Dorsolateral prefrontal cortex (tissue), 120 donors: ENCODE measurements at regions of chr16 and their contacts with region 1.

Region 1: DNA sequence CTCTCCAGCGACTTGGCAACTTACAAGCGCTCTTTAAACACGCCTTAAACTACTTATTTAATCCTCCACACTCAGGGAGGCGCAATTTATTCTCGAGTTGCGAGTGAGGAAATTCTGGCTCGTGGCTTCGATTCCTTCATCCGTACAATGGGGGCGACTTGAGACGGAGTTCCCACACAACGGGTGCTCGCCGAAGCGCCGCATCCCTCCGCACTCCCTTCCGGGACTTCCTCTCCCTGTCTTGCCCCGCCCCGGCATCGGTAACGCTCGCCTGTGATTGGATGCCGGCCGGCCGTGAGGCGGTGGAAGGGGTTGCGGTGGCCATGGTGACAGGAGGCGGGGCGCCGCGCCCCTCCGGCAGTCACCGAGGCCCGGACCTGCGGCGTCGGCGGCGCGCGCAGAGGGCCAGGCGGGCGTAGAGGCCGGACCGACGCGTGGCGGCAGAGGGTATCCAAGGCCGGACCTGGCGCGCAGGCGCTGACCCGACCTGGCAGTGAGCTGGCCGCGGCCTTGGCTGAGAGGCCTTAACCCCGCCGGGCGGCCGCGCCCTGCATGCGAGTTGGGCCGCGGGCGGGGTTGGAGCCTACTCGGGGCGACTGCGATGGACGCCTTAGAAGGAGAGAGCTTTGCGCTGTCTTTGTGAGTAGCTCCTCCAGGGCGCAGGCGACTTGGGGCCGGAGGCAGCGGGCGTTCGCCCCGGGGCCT is at the start of gene ARL2BP:
- DNase-seq: peak; percentile 96 to 100 (median 99)
- H3K4me3 ChIP-seq: peak within 1 kb of the TSS; percentile 68 to 98 (median 90)
- H3K27ac ChIP-seq: peak within 1 kb of the TSS; percentile 59 to 97 (median 94)
- H3K27me3 ChIP-seq: no peaks in the 10 kb centered on the region
- CTCF ChIP-seq: peak in 47 of 56 donors; percentile 8 to 61 (median 37)
- total RNA-seq, gene ARL2BP: 36.8 to 68.6 (median 51.1) TPM

Region 2: DNA sequence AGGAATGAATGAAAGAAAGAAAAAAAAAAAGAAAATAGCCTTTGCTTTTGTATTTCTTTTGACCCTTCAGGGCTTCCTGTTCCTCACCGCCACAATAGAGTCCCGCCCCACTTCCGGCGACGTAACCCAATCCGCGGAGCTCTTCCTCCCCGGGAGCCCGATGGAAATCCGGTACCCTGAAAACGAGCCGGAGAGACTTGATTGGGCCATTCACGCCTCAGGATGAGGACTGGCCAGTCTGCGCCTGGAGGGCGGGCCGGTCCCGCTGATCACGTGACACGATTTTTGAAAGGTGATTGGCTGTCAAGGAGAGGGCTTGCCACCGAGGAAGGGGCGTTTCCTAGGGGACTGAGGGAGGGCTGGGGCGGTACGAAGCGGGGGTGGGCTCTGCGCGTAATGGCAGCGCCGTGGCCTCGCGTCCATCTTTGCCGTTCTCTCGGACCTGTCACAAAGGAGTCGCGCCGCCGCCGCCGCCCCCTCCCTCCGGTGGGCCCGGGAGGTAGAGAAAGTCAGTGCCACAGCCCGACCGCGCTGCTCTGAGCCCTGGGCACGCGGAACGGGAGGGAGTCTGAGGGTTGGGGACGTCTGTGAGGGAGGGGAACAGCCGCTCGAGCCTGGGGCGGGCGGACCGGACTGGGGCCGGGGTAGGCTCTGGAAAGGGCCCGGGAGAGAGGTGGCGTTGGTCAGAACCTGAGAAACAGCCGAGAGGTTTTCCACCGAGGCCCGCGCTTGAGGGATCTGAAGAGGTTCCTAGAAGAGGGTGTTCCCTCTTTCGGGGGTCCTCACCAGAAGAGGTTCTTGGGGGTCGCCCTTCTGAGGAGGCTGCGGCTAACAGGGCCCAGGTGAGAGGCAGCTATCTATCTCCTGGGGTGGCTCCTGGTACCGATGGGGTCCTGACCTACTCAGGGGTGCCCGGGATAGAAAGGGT is 58.7 kb before region 1 on chr16 and contains the starts of genes PSME3IP1 and RSPRY1:
- intact Hi-C with region 1: loop called (anchors 1 to 5 kb)
- DNase-seq: peak; percentile 94 to 100 (median 99)
- H3K4me3 ChIP-seq: peak within 1 kb of the TSS; percentile 62 to 100 (median 97)
- H3K27ac ChIP-seq: peak within 1 kb of the TSS; percentile 73 to 99 (median 95)
- H3K27me3 ChIP-seq: no peaks in the 10 kb centered on the region
- CTCF ChIP-seq: peak in 13 of 56 donors; percentile 1 to 44 (median 19)
- total RNA-seq, gene PSME3IP1: 100 to 178 (median 132) TPM
- total RNA-seq, gene RSPRY1: 21.4 to 53.0 (median 33.6) TPM

Region 3: GRCh38 chr16:57284208-57284951 is 39.5 kb after region 1 on chr16 and contains the start of gene PLLP:
- intact Hi-C with region 1: loop called (anchors 1 to 5 kb)
- DNase-seq: peak in 7 of 10 donors; percentile 17 to 81 (median 60)
- H3K4me3 ChIP-seq: peak within 1 kb of the TSS; percentile 42 to 93 (median 75)
- H3K27ac ChIP-seq: peak within 1 kb of the TSS; percentile 58 to 99 (median 95)
- H3K27me3 ChIP-seq: peaks cover 0 to 17% (median 3%) of the 10 kb centered on the region in 45 donors
- CTCF ChIP-seq: peak in 12 of 56 donors; percentile 7 to 29 (median 14)
- total RNA-seq, gene PLLP: 20.8 to 459 (median 91.3) TPM

Region 4: GRCh38 chr16:57413301-57413730 is 168.4 kb after region 1 on chr16:
- intact Hi-C with region 1: loop called (anchors 5 kb)
- DNase-seq: no peak
- H3K4me3 ChIP-seq: no peak overlapping the region
- H3K27ac ChIP-seq: no peak overlapping the region
- H3K27me3 ChIP-seq: no peaks in the 10 kb centered on the region
- CTCF ChIP-seq: no peak